IMR-90 (cell line): ENCODE measurements at regions of chr18 and their contacts with region 1.

Region 1: DNA sequence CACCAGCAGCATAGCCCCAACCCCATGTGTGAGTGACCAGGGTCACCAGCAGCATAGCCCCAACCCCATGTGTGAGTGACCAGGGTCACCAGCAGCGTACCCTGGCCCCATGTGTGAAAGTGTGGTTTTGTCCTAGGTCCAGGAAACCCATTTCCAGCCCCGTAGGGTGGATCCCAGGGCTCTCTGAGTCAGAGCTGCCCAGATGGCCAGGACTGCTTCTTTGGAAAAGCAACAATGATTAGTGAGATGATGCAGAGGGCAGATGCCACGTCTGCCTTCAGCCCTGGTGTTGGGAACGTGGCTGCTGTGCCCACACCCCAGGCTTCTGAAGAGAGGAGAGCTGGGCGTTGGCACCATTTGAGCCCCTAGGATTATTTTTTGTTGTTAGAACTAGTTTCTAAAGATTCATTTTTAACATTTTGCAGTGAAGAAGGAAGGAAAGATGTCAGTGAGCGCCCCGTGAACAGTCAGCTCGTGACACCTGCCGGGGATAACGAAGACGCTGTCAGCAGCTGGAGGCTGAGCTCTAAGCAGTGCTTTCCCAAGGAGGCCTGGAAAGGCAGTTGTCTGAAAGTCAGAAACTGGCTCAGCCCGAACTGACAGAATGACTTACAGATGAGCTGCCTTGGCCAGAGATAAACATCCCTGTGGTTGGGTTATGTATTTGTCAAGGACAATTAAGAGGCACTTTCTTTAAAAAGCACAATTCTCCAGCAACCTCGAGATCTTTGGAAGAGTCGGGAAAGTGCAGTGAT is 32.1 kb upstream of the KCNG2 start:
- DNase-seq: peak; percentile 44
- ATAC-seq: peak; percentile 72
- H3K4me3 ChIP-seq: no peak overlapping the region
- H3K27ac ChIP-seq: no peak overlapping the region
- H3K4me1 ChIP-seq: peaks cover 3% of the 10 kb centered on the region; the same call in 1 of the 2 replicates
- H3K27me3 ChIP-seq: peaks cover 6% of the 10 kb centered on the region; the same call in 1 of the 2 replicates
- CTCF ChIP-seq: no peak
- POLR2A ChIP-seq: no peak
- RAD21 ChIP-seq: no peak

Region 2: DNA sequence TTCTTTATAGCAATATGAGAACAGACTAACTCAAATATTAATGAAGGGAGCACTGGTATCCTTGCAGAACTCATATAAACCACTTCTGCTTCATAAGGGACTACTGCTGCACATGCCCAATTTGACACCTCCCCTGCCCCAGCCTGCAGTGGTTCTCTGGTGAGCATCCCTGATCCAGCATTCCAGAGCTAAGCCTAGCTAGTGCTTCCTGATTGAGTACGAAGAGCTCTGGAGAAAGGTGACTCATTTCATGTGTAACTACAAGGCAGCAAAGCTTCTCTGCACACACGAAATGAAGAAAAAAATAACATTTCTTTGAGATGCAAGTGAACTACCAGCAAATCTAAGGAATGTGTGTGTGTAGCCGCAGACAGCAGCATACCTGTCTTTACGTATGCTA is 320.6 kb after region 1 on chr18:
- CTCF ChIA-PET with region 1: no interaction called
- POLR2A ChIA-PET with region 1: interaction called, 27 read pairs
- dilution Hi-C with region 1: no loop called
- in situ Hi-C with region 1: no loop called
- intact Hi-C with region 1: no loop called
- DNase-seq: peak; percentile 49
- ATAC-seq: peak; percentile 75
- H3K4me3 ChIP-seq: no peak overlapping the region
- H3K27ac ChIP-seq: no peak overlapping the region
- H3K4me1 ChIP-seq: no peaks in the 10 kb centered on the region
- H3K27me3 ChIP-seq: peaks cover 5% of the 10 kb centered on the region
- CTCF ChIP-seq: no peak
- POLR2A ChIP-seq: no peak
- RAD21 ChIP-seq: no peak